Activated naive CD4-positive, alpha-beta T cell treated with anti-CD3 and anti-CD28 coated beads for 36 hours (primary cell): ENCODE measurements at regions of chr14 and their contacts with region 1.

Region 1: GRCh38 chr14:63388763-63389431 is 70.2 kb upstream of the GPHB5 start:
- DNase-seq: peak; percentile 76
- H3K4me3 Mint-ChIP-seq: no peak overlapping the region
- H3K27ac Mint-ChIP-seq: no peak overlapping the region
- H3K4me1 Mint-ChIP-seq: no peaks in the 10 kb centered on the region
- H3K27me3 Mint-ChIP-seq: no peaks in the 10 kb centered on the region

Region 2: GRCh38 chr14:62691613-62692487 is 697.0 kb before region 1 on chr14:
- CTCF ChIA-PET with region 1: no interaction called
- intact Hi-C with region 1: no loop called
- DNase-seq: no peak
- H3K4me3 Mint-ChIP-seq: no peak overlapping the region
- H3K27ac Mint-ChIP-seq: no peak overlapping the region
- H3K4me1 Mint-ChIP-seq: no peaks in the 10 kb centered on the region
- H3K27me3 Mint-ChIP-seq: no peaks in the 10 kb centered on the region

Region 3: DNA sequence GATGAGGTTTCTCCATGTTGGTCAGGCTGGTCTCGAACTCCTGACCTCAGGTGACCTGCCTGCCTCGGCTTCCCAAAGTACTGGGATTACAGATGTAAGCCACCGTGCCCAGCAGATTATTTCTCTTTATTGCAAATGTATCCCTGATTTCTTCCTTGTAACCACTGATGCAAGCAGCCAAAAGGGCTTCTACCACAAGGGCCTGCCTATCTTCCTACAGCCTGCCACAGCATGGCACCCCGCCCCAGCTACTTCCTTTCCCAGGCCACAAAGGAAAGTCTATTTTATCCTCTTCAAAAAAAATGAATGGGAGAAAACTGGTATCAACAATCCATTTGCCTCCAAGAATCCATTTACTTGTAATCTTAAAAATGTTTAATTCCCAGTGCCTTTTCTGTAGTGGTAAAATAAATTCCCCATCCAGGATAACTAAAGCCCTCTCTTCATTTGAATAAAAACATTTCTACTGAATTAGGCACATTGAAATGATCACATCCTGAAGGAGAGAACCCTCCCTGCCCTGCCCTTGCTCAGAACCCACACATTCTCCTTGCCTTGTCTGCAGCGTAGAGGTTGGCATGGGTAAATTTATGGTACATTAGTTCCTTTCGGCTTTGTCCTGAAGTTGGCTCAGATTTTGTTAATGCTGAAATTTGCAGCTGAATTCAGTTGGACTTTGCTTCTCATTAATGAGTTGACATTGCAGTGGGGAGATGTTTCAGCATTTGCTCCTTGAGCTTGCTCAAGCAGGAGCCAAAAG is 89.4 kb before region 1 on chr14:
- CTCF ChIA-PET with region 1: no interaction called
- intact Hi-C with region 1: no loop called
- DNase-seq: no peak
- H3K4me3 Mint-ChIP-seq: no peak overlapping the region
- H3K27ac Mint-ChIP-seq: no peak overlapping the region
- H3K4me1 Mint-ChIP-seq: peaks cover 5% of the 10 kb centered on the region
- H3K27me3 Mint-ChIP-seq: peaks cover 14% of the 10 kb centered on the region

Region 4: DNA sequence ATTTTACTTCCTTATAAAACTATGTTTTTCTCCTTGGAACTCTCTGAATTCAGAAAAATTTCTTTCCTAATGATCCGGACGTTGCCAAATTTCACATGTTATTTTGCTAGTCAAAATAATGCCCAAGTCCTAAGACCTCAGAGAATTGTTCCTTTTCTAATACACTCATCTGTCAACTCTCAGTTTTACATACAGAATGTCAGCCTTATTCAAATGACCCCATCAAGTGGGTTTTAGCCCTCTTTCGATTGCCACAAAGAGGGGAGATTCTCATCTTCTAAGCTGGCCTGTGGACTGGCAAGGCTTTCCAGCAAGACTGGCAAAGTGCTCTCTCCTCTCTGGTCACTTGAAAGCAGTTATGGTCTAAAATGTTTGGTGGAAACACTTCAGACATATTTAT is 29.1 kb after region 1 on chr14:
- CTCF ChIA-PET with region 1: interaction called, 11 read pairs
- intact Hi-C with region 1: no loop called
- DNase-seq: no peak
- H3K4me3 Mint-ChIP-seq: no peak overlapping the region
- H3K27ac Mint-ChIP-seq: no peak overlapping the region
- H3K4me1 Mint-ChIP-seq: no peaks in the 10 kb centered on the region
- H3K27me3 Mint-ChIP-seq: no peaks in the 10 kb centered on the region

Region 5: DNA sequence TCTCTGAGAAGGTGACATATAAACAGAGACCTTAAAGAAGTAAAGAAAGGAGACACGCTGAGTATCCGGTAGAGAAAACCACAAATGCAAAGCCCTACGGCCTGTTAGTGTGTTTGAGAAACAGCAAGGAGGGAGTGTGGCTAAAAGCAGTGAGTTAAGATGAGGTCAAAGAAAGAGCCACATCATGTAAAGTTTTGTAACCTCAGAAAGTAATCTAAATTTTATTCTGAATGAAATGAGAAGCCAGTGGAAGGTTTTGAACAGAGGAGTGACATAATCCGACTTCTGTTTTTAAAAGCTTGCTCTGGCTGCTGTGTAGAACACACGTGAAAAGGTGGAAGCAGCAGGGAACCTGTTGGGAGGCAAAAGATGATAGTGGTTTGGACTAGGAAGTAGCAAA is 121.6 kb after region 1 on chr14:
- CTCF ChIA-PET with region 1: no interaction called
- intact Hi-C with region 1: no loop called
- DNase-seq: peak; percentile 14
- H3K4me3 Mint-ChIP-seq: no peak overlapping the region
- H3K27ac Mint-ChIP-seq: peak overlapping the region; percentile 20
- H3K4me1 Mint-ChIP-seq: peaks cover 56% of the 10 kb centered on the region
- H3K27me3 Mint-ChIP-seq: no peaks in the 10 kb centered on the region

Region 6: DNA sequence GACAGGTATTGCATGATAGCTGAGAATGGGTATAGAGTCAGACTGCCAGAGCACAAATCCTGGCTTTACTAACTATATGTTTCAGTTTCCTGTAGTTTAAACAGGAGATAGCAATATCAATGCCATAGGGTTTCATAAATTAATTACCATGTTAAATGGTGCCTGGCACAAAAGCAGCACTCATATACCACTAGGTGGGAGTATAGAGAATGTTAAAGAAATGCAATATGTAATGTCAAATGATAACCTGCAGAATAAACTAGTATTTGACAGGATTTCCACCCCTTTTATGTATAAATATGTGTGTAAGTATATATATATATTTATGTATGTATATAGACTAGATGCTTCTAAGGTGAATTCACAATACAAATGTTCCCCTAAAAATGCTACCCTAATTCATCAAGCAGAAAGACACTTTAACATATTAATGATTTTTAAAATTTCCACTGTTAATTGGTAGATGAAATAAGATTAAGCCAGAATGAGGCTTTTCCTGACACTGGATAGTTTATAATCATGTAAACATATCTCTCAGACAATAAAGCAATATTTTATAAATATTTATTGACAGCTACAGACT is 244.1 kb after region 1 on chr14:
- CTCF ChIA-PET with region 1: interaction called, 17 read pairs
- intact Hi-C with region 1: no loop called
- DNase-seq: no peak
- H3K4me3 Mint-ChIP-seq: no peak overlapping the region
- H3K27ac Mint-ChIP-seq: no peak overlapping the region
- H3K4me1 Mint-ChIP-seq: peaks cover 51% of the 10 kb centered on the region
- H3K27me3 Mint-ChIP-seq: no peaks in the 10 kb centered on the region

Region 7: GRCh38 chr14:63770187-63770807 is 381.4 kb after region 1 on chr14:
- CTCF ChIA-PET with region 1: interaction called, 15 read pairs
- intact Hi-C with region 1: loop called (anchors 1 kb)
- DNase-seq: peak; percentile 72
- H3K4me3 Mint-ChIP-seq: no peak overlapping the region
- H3K27ac Mint-ChIP-seq: no peak overlapping the region
- H3K4me1 Mint-ChIP-seq: no peaks in the 10 kb centered on the region
- H3K27me3 Mint-ChIP-seq: no peaks in the 10 kb centered on the region